Naive thymus-derived CD4-positive, alpha-beta T cell (primary cell): ENCODE measurements at regions of chr21 and their contacts with region 1.

Region 1: GRCh38 chr21:45074048-45074817 is at the start of gene ADARB1:
- DNase-seq: peak; percentile 50 to 82 (median 69)
- ATAC-seq: peak; percentile 84
- H3K4me3 ChIP-seq: peak within 1 kb of the TSS; percentile 65
- H3K4me3 Mint-ChIP-seq: peak within 1 kb of the TSS; percentile 91 to 100 (median 96)
- H3K27ac ChIP-seq: peak within 1 kb of the TSS; percentile 87
- H3K27ac Mint-ChIP-seq: peak within 1 kb of the TSS; percentile 86 to 98 (median 94)
- H3K4me1 ChIP-seq: peaks cover 31 to 34% of the 10 kb centered on the region in 2 donors
- H3K4me1 Mint-ChIP-seq: peaks cover 31 to 45% (median 41%) of the 10 kb centered on the region in 7 donors
- H3K27me3 ChIP-seq: no peaks in the 10 kb centered on the region
- H3K27me3 Mint-ChIP-seq: no peaks in the 10 kb centered on the region
- total RNA-seq, gene ADARB1: 35.7 to 52.2 (median 38.9) TPM

Region 2: GRCh38 chr21:44911389-44912157 is 162.7 kb before region 1 on chr21:
- CTCF ChIA-PET with region 1: no interaction called
- POLR2A ChIA-PET with region 1: interaction called, 3 read pairs
- intact Hi-C with region 1: loop called in 1 of 2 experiments (anchors 1 kb)
- DNase-seq: peak; percentile 47 to 82 (median 78)
- ATAC-seq: peak; percentile 76
- H3K4me3 ChIP-seq: peak overlapping the region; percentile 49
- H3K4me3 Mint-ChIP-seq: peak overlapping the region; percentile 67 to 91 (median 82)
- H3K27ac ChIP-seq: peak overlapping the region; percentile 80
- H3K27ac Mint-ChIP-seq: peak overlapping the region; percentile 74 to 98 (median 93)
- H3K4me1 ChIP-seq: peaks cover 59 to 83% of the 10 kb centered on the region in 2 donors
- H3K4me1 Mint-ChIP-seq: peaks cover 53 to 86% (median 64%) of the 10 kb centered on the region in 7 donors
- H3K27me3 ChIP-seq: no peaks in the 10 kb centered on the region
- H3K27me3 Mint-ChIP-seq: no peaks in the 10 kb centered on the region

Region 3: GRCh38 chr21:44939532-44940115 is 134.6 kb before region 1 on chr21 and contains the start of gene SLX9:
- CTCF ChIA-PET with region 1: interaction called, 3 read pairs
- POLR2A ChIA-PET with region 1: no interaction called
- intact Hi-C with region 1: loop called in 1 of 2 experiments (anchors 5 kb)
- DNase-seq: peak; percentile 70 to 88 (median 79)
- ATAC-seq: peak; percentile 94
- H3K4me3 ChIP-seq: peak within 1 kb of the TSS; percentile 83
- H3K4me3 Mint-ChIP-seq: peak within 1 kb of the TSS; percentile 87 to 95 (median 91)
- H3K27ac ChIP-seq: peak within 1 kb of the TSS; percentile 80
- H3K27ac Mint-ChIP-seq: peak within 1 kb of the TSS; percentile 82 to 96 (median 87)
- H3K4me1 ChIP-seq: peaks cover 22 to 34% of the 10 kb centered on the region in 2 donors
- H3K4me1 Mint-ChIP-seq: peaks cover 30 to 55% (median 45%) of the 10 kb centered on the region in 7 donors
- H3K27me3 ChIP-seq: no peaks in the 10 kb centered on the region
- H3K27me3 Mint-ChIP-seq: no peaks in the 10 kb centered on the region
- total RNA-seq, gene SLX9: 17.8 to 46.4 (median 20.6) TPM

Region 4: DNA sequence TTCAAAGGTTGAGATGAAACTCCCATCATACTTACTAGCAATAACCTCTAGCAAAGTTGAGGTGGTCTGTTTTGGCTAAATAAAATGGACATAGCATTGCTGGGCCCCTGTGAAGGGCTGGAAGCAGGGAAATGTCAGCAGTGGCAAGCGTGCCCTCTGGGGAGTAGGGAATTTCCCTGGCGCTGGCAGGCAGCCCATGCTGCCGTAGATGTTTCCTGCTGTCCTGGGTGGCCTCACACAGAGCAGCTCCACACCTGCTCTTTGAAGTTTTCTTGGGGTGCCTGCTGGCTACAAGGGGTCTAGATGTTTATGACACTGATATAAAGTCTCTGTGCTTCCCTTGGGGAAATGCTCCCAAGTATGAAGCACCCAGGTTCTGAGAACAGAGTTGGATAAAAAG is 30.3 kb after region 1 on chr21:
- CTCF ChIA-PET with region 1: no interaction called
- POLR2A ChIA-PET with region 1: interaction called, 5 read pairs
- intact Hi-C with region 1: loop called (anchors 1 to 2 kb)
- DNase-seq: peak in 1 of 9 donors; percentile 42
- ATAC-seq: peak; percentile 74
- H3K4me3 ChIP-seq: no peak overlapping the region
- H3K4me3 Mint-ChIP-seq: peak overlapping the region; percentile 24 to 70 (median 61)
- H3K27ac ChIP-seq: no peak overlapping the region
- H3K27ac Mint-ChIP-seq: peak overlapping the region; percentile 3 to 84 (median 64)
- H3K4me1 ChIP-seq: peaks cover 12 to 36% of the 10 kb centered on the region in 2 donors
- H3K4me1 Mint-ChIP-seq: peaks cover 41 to 89% (median 65%) of the 10 kb centered on the region in 7 donors
- H3K27me3 ChIP-seq: no peaks in the 10 kb centered on the region
- H3K27me3 Mint-ChIP-seq: no peaks in the 10 kb centered on the region

Region 5: GRCh38 chr21:45130324-45130774 is 56.1 kb after region 1 on chr21:
- CTCF ChIA-PET with region 1: interaction called, 9 read pairs
- POLR2A ChIA-PET with region 1: interaction called, 4 read pairs
- intact Hi-C with region 1: loop called (anchors 1 to 2 kb)
- DNase-seq: no peak
- ATAC-seq: no peak
- H3K4me3 ChIP-seq: no peak overlapping the region
- H3K4me3 Mint-ChIP-seq: no peak overlapping the region
- H3K27ac ChIP-seq: no peak overlapping the region
- H3K27ac Mint-ChIP-seq: peak overlapping the region in 1 of 9 donors; percentile 33
- H3K4me1 ChIP-seq: peaks cover 0 to 7% of the 10 kb centered on the region in 2 donors
- H3K4me1 Mint-ChIP-seq: peaks cover 18 to 34% (median 27%) of the 10 kb centered on the region in 7 donors
- H3K27me3 ChIP-seq: no peaks in the 10 kb centered on the region
- H3K27me3 Mint-ChIP-seq: no peaks in the 10 kb centered on the region

Region 6: DNA sequence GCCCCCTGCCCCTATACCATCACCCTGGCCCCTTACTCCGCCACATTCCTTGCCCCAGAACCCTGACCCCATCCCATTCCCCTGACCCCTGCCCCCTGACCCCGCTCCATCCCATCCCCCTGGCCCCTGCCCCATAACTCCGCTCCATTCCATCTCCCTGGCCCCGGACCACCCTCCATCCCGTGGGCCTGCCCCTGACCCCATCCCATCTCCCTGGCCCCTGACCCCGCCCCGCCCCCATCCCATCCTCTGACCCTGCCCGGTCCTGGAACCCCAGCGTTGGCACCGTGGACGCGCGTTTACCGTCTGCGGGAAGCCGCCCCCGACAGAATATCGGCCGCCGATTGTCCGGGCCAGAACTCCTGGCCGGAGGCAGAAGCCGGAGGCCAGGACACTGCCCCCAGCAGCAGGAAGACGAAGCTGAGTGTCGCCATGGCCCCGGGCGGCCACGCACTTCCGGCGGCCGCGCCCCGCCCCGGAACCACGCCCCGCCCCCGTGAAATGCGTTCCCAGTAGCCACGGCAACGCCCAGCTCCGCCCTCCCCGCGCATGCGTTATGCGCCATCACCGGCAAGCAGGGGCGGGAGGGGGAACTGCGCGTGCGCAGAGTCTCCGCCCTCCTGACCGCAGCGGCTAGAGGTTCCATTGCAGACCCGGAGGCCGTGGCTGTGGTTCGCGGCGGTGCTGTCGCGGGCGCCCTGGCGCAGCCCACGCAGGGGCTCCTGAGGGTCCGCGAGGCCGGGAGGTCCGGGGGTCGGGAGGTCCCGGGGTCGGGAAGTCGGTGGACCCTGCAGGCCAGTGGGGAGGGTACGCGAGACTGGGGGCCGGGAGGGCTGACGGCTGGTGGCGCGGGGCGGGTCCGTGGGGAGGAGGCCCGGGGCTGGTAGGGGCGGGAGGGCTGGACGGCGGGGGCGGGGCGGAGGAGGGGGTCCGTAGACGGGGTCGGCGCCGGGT is 213.5 kb after region 1 on chr21 and contains the start of gene POFUT2:
- CTCF ChIA-PET with region 1: no interaction called
- POLR2A ChIA-PET with region 1: no interaction called
- intact Hi-C with region 1: loop called in 1 of 2 experiments (anchors 5 kb)
- DNase-seq: peak; percentile 95 to 100 (median 98)
- ATAC-seq: peak; percentile 91
- H3K4me3 ChIP-seq: peak within 1 kb of the TSS; percentile 68
- H3K4me3 Mint-ChIP-seq: peak within 1 kb of the TSS; percentile 68 to 88 (median 87)
- H3K27ac ChIP-seq: peak within 1 kb of the TSS; percentile 97
- H3K27ac Mint-ChIP-seq: peak within 1 kb of the TSS; percentile 72 to 93 (median 87)
- H3K4me1 ChIP-seq: peaks cover 7 to 16% of the 10 kb centered on the region in 2 donors
- H3K4me1 Mint-ChIP-seq: peaks cover 11 to 46% (median 30%) of the 10 kb centered on the region in 7 donors
- H3K27me3 ChIP-seq: no peaks in the 10 kb centered on the region
- H3K27me3 Mint-ChIP-seq: peaks cover 0 to 10% (median 0%) of the 10 kb centered on the region in 5 donors
- total RNA-seq, gene POFUT2: 20.1 to 53.3 (median 47.8) TPM